Thyroid gland (tissue), 4 donors: ENCODE measurements at regions of chr12 and their contacts with region 1.

Region 1: GRCh38 chr12:2879853-2880252 is 2.8 kb downstream of the RHNO1 start:
- DNase-seq: no peak
- H3K4me3 ChIP-seq: no peak overlapping the region
- H3K27ac ChIP-seq: no peak overlapping the region
- H3K4me1 ChIP-seq: peaks cover 14 to 22% of the 10 kb centered on the region in 2 donors
- H3K27me3 ChIP-seq: no peaks in the 10 kb centered on the region
- CTCF ChIP-seq: no peak
- POLR2A ChIP-seq: no peak

Region 2: GRCh38 chr12:2944401-2945047 is 64.7 kb after region 1 on chr12:
- intact Hi-C with region 1: loop called (anchors 5 kb)
- DNase-seq: peak; percentile 75 to 82
- H3K4me3 ChIP-seq: no peak overlapping the region
- H3K27ac ChIP-seq: no peak overlapping the region
- H3K4me1 ChIP-seq: peaks cover 0 to 8% of the 10 kb centered on the region in 2 donors
- H3K27me3 ChIP-seq: no peaks in the 10 kb centered on the region
- CTCF ChIP-seq: peak; percentile 53 to 96 (median 91)
- POLR2A ChIP-seq: no peak

Region 3: DNA sequence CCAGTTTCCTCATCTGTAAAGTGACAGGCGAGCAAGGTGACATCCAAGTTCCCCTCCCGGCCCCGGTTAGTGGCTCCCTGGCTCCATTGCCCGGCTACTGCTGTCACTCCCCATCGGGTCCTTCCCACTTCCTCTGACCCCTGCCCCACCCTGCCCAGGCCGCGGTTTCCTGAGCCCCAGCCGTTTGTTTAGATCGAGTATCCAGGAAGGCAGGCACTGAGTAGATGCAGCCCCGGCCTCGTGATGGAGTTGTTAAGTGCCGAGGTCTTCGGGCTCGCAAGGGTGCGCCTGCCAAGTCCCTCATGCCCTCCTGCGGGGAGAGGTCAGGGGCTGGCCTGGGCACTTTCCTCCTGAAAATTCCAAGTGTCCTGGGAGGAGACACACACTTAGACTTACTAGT is 134.8 kb after region 1 on chr12:
- intact Hi-C with region 1: no loop called
- DNase-seq: no peak
- H3K4me3 ChIP-seq: no peak overlapping the region
- H3K27ac ChIP-seq: no peak overlapping the region
- H3K4me1 ChIP-seq: peaks cover 0 to 5% of the 10 kb centered on the region in 2 donors
- H3K27me3 ChIP-seq: no peaks in the 10 kb centered on the region
- CTCF ChIP-seq: no peak
- POLR2A ChIP-seq: no peak

Region 4: DNA sequence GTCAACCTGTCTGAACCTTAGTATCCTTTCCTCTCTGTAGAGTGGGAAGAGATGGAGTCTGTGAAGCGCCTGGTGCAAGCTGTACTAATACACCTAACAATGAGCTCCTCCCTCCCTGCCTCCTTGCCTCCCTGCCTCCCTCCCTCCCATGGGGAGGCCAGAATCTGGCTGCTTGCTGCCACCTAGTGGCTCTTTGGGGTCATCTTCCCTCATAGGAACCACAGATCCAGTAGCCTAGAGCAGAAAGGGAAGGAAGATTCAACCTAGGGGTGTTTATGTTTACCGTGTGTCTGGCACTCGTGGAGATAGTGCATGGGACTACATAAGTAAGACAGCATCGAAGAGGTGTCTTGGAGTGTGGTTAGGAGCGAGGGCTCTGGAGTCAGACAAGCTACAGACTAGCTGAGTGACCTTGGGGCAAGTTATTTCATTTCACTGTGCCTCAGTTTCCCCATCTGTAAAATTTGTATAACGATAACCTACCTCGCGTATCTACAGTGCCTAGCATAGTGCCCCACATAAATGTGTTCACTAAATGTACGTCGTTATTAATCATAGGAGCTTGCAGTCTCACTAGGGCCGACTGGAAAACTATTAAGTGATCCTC is 161.8 kb after region 1 on chr12:
- intact Hi-C with region 1: loop called (anchors 10 kb)
- DNase-seq: peak; percentile 42 to 53
- H3K4me3 ChIP-seq: no peak overlapping the region
- H3K27ac ChIP-seq: no peak overlapping the region
- H3K4me1 ChIP-seq: peaks cover 6 to 28% of the 10 kb centered on the region in 2 donors
- H3K27me3 ChIP-seq: no peaks in the 10 kb centered on the region
- CTCF ChIP-seq: peak; percentile 12 to 60 (median 32)
- POLR2A ChIP-seq: no peak